AG04449 (cell line): ENCODE measurements at regions of chr4 and their contacts with region 1.

Region 1: DNA sequence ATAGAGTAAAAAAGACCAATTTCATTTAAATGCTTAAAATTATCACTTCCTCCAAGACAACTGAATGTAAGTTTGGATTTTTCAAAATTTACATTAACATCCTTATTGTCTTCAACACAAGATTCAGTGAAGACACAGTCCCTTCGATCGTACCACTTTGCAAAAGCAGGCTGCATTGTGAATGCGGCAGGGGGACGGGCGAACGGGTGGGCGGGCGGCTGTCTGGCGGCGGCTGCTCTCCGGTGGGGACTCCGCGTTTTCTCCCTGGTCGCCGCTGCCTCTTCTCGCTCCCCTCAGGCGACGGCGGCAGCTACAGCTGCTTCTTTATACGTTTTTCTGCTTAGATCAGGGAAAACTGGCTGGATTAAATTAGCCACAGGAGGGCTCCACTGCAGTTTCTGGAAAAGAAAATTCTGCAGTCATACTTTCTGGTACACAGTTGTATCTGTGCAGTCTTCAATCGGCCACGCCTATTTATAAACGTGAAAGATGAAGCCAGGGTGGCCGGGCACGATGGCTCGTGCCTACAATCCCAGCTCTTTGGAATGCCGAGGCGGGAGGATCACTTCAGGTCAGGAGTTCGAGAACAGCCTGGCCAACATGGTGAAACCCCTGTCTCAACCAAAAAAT is 33.9 kb upstream of the HPF1 start:
- DNase-seq: no peak
- H3K4me3 ChIP-seq: peak overlapping the region; percentile 51
- CTCF ChIP-seq: peak; percentile 43

Region 2: GRCh38 chr4:169530048-169530447 is 261.6 kb before region 1 on chr4:
- CTCF ChIA-PET with region 1: no interaction called
- POLR2A ChIA-PET with region 1: no interaction called
- DNase-seq: no peak
- H3K4me3 ChIP-seq: no peak overlapping the region
- CTCF ChIP-seq: no peak

Region 3: GRCh38 chr4:169619959-169620879 is 171.4 kb before region 1 on chr4 and contains the start of gene CLCN3:
- CTCF ChIA-PET with region 1: interaction called, 11 read pairs
- POLR2A ChIA-PET with region 1: no interaction called
- DNase-seq: peak; percentile 61
- H3K4me3 ChIP-seq: peak within 1 kb of the TSS; percentile 90
- CTCF ChIP-seq: peak; percentile 22

Region 4: GRCh38 chr4:170047771-170048354 is 256.2 kb after region 1 on chr4:
- CTCF ChIA-PET with region 1: interaction called, 19 read pairs
- POLR2A ChIA-PET with region 1: no interaction called
- DNase-seq: peak; percentile 21
- H3K4me3 ChIP-seq: no peak overlapping the region
- CTCF ChIP-seq: peak; percentile 48

Region 5: GRCh38 chr4:170057866-170058265 is 266.2 kb after region 1 on chr4:
- CTCF ChIA-PET with region 1: interaction called, 10 read pairs
- POLR2A ChIA-PET with region 1: no interaction called
- DNase-seq: no peak
- H3K4me3 ChIP-seq: no peak overlapping the region
- CTCF ChIP-seq: no peak